ENCODE measurements at regions of chr3 and their contacts with region 1.

Region 1: GRCh38 chr3:171353423-171353822 is 106.8 kb downstream of the TNIK start:
- DNase-seq: no peak
- ATAC-seq: no peak
- H3K4me3 ChIP-seq: no peak overlapping the region
- H3K27ac ChIP-seq: no peak overlapping the region
- H3K4me1 ChIP-seq: no peaks in the 10 kb centered on the region
- H3K27me3 ChIP-seq: peaks cover 5% of the 10 kb centered on the region
- CTCF ChIP-seq: no peak

Region 2: GRCh38 chr3:171257251-171258203 is 95.9 kb before region 1 on chr3:
- CTCF ChIA-PET with region 1: no interaction called
- POLR2A ChIA-PET with region 1: interaction called, 11 read pairs
- in situ Hi-C with region 1: no loop called
- intact Hi-C with region 1: no loop called
- DNase-seq: no peak
- ATAC-seq: no peak
- H3K4me3 ChIP-seq: no peak overlapping the region
- H3K27ac ChIP-seq: no peak overlapping the region
- H3K4me1 ChIP-seq: no peaks in the 10 kb centered on the region
- H3K27me3 ChIP-seq: peaks cover 11% of the 10 kb centered on the region
- CTCF ChIP-seq: no peak

Measured in Panc1 (cell line).